PC-3 (cell line): ENCODE measurements at regions of chr3 and their contacts with region 1.

Region 1: DNA sequence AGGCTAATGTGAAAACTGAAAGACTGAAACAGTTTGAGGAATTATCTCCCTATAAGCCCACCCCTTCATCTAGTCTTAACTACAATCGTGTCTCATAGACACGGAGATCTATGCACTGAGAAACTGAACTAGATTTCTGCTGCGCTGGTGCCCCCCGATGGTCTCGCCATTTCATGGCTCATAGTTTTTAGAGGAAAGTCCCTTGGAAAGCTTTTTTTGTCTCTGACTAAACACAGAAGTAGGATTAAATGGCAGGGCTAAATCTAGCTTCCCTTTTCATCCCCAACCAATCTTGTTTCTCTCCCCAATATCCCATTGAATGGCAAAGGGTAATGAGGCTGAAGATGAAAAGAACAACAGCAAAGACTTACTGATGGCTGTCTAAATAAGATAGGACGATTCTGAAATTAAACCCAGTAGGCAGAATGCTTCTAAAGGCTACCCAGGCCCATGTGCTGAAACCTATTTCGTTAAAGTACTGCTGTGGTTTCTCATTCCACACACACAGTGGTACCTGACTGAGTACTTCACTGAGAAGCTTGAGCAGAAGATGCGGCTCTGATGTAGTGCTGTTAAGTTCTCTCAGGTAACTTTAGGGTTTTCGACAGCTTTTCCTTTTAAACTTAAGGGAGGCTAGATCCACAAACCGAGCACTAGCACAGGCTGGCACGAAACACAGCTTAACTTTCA is 142.7 kb downstream of the GADL1 start:
- DNase-seq: peak; percentile 62
- ATAC-seq: peak; percentile 12; the same call in 1 of the 2 replicates
- H3K4me3 ChIP-seq: no peak overlapping the region
- H3K27ac ChIP-seq: no peak overlapping the region
- H3K4me1 ChIP-seq: peaks cover 44% of the 10 kb centered on the region
- H3K27me3 ChIP-seq: no peaks in the 10 kb centered on the region
- CTCF ChIP-seq: peak; percentile 68

Region 2: DNA sequence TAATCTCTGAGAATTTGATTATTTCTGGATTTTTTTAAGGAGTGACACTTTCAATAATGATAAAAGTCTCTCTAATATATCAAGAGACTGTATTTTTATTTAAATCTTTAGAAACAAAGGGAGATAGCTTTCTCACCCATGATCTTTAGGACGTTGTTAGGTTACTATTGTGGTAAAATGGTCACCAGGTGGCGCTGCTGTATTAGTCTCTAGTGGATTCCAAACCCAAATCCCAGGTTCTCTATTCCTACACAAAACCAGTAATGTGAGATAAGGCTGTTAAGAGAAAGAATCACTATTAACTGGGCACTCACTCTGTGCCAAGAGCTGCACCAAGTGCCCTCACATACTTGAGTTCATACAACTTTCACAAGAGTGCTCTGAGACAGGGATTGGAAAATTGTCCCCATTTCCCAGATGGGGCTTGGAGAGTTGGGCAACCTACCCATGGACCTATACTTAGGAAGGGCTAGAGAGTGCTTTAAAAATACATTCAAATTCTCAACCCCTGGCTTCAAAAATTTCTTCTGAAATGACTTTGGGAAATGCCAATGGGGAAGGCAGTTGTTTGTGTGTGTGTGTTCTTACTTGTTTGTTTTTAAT is 738.7 kb before region 1 on chr3:
- CTCF ChIA-PET with region 1: interaction called, 6 read pairs
- POLR2A ChIA-PET with region 1: no interaction called
- intact Hi-C with region 1: loop called (anchors 1 kb)
- DNase-seq: peak; percentile 92
- ATAC-seq: peak; percentile 89
- H3K4me3 ChIP-seq: no peak overlapping the region
- H3K27ac ChIP-seq: no peak overlapping the region
- H3K4me1 ChIP-seq: peaks cover 8% of the 10 kb centered on the region
- H3K27me3 ChIP-seq: no peaks in the 10 kb centered on the region
- CTCF ChIP-seq: peak; percentile 94

Region 3: DNA sequence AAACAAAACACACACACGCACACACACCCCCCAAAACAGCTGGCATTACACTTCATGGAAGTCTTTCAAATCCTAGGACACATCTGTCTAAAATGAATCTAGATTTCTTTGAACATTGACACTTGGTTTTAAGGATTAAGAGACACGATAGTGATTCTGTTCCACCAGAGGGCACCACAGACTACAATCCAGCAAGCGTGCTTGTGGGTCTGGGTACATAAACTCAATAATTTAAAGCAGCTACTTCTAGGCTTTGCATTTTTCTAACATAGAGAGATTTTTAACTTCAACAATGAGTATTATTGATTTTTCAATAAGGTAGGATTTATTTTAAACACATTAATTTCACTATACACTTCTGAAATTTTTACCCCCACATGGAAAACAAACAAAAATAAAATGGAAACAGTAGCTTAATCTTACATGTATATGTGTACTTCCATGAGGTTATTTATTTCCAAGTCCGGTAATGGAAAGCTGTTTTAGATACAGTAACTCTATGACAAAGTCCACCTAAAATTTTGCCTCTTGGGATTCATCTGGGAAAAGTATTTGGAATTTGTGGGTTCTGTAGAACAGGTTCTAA is 709.4 kb before region 1 on chr3:
- CTCF ChIA-PET with region 1: interaction called, 3 read pairs
- POLR2A ChIA-PET with region 1: no interaction called
- intact Hi-C with region 1: loop called (anchors 1 kb)
- DNase-seq: peak; percentile 84
- ATAC-seq: peak; percentile 87
- H3K4me3 ChIP-seq: no peak overlapping the region
- H3K27ac ChIP-seq: no peak overlapping the region
- H3K4me1 ChIP-seq: no peaks in the 10 kb centered on the region
- H3K27me3 ChIP-seq: no peaks in the 10 kb centered on the region
- CTCF ChIP-seq: peak; percentile 93

Region 4: DNA sequence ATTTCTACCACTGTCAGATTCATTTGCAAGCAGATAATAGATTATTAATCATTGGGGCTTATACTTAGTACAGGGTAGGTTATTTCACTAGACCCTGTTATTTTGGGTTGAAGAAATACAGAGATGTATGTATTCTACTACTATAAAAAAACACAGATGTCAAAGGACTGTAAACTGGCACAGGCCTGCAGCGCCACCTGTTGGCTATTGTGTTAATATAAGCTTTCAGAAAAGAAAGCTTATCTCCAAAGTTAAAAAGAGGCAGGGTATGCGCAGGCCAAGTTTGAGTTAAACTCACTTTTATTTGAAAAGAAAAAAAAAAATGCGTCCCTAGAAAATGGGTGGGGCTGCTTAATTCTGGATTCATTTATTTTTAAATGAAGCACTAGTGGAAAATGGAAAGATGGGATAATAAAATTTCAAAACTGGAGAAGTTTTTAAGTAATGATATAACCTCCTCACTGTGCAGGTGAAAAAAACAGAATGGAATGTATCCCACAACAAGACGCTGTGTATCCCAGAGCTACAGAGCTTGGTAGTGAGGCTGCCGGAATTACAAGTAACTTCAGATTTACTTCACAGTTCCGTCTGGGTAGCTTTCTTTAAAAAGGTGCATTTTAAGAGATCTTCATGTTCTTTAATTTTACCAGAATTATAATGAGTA is 552.5 kb before region 1 on chr3:
- CTCF ChIA-PET with region 1: interaction called, 3 read pairs
- POLR2A ChIA-PET with region 1: no interaction called
- intact Hi-C with region 1: loop called (anchors 2 kb)
- DNase-seq: peak; percentile 77
- ATAC-seq: peak; percentile 59
- H3K4me3 ChIP-seq: no peak overlapping the region
- H3K27ac ChIP-seq: no peak overlapping the region
- H3K4me1 ChIP-seq: no peaks in the 10 kb centered on the region
- H3K27me3 ChIP-seq: no peaks in the 10 kb centered on the region
- CTCF ChIP-seq: peak; percentile 93

Region 5: DNA sequence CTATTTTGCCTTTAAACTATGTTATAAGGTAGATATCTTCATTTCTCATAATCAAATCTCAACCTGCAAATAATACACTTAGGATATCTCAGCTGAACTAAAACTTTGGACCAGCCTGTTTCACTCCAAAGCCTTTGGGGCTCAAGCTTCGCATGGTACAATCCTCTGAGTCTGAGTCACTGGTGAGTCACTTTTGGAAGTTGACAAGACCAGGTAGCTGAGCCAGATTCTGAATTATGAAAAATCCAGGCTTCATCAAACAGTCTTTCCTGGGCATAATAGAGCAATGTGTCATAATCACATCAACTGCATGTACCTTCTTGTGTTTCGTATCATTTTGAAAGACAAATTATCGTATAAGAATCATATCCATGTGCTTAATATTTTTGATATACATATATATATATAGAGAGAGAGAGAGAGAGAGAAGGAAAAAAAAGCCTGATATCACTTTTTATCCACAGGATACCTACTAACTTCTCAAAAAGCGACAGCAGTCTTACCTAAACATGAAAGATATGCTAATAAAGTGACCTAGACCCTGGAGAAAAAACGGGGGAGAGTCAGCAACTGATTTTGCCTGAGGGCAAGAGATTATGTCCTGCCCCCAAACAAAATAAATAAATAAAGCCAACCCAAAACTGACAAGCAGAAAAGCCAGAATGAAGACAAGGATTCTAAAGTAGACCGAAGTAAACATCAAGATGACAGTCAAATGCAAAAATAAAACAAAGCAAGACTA is 409.3 kb before region 1 on chr3:
- CTCF ChIA-PET with region 1: no interaction called
- POLR2A ChIA-PET with region 1: no interaction called
- intact Hi-C with region 1: loop called (anchors 5 kb)
- DNase-seq: peak; percentile 99
- ATAC-seq: peak; percentile 64
- H3K4me3 ChIP-seq: peak overlapping the region; percentile 28; the same call in 1 of the 2 replicates
- H3K27ac ChIP-seq: peak overlapping the region; percentile 98
- H3K4me1 ChIP-seq: peaks cover 59% of the 10 kb centered on the region
- H3K27me3 ChIP-seq: no peaks in the 10 kb centered on the region
- CTCF ChIP-seq: no peak

Region 6: DNA sequence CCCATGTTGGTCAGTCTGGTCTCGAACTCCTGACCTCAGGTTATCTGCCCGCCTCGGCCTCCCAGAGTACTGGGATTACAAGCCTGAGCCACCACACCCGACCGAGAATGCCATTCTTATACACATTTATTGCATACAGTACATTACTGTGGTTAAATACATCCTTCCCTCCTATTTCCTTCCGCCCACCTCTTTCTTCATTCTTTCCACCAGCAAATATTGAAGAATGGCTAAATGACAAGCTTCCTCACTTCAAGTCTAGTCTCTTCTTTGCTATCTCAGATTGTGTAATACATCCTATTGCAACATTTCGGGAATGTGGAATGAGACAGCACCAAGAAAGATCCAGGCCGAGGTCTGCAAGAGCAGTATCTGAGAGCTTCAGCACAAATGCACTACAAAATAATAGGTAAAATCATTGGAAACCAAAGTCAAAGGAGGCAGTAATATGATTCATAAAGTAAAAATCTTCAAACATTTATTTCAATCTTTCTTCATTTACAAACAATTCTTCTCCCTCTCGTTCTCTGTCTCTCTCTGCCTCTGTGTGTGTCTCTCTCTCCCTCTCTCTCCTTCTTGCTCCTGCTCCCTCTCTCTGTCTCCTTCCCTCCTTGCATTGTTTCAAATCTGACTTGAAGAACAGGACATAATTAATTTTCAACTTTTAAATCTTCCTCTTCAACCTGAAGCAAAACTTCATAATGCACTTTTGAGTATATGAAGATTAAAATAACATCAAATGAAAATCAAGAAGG is 240.1 kb before region 1 on chr3:
- CTCF ChIA-PET with region 1: no interaction called
- POLR2A ChIA-PET with region 1: no interaction called
- intact Hi-C with region 1: loop called (anchors 10 kb)
- DNase-seq: peak; percentile 98
- ATAC-seq: peak; percentile 74
- H3K4me3 ChIP-seq: no peak overlapping the region
- H3K27ac ChIP-seq: peak overlapping the region; percentile 71
- H3K4me1 ChIP-seq: peaks cover 43% of the 10 kb centered on the region
- H3K27me3 ChIP-seq: no peaks in the 10 kb centered on the region
- CTCF ChIP-seq: no peak

Region 7: DNA sequence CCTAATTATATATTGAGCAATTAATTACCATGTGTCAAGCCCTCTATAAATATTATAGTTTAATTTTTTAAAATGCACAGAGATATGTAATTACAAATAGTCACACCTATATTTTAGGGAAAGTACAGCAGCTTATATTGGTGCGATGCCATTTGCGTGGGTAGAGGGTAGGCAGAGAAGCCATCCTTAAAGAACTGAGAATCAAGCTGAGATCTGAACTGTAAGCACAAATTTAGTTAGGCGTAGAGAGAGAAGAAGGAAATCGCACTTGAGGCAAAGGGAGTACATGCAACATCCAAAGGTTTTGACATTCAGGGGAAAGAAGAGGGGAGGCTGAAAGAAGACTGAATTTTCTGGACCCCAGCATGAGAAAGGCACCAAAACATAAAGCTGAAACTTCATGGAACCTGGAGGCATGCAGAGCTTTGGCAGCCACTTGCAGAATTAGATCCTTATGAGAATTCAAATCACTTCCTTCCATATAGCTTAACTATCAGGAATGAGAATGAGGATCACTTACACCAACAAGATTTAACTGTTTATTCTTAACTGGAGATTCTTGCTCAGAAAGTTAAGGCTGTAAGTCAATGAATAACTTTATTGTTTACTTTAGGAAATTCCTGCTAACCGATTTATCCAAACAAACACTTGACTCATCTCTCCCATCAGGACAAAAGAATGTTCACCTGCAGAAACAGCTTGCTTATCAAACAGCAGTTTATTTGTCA is 31.0 kb before region 1 on chr3:
- CTCF ChIA-PET with region 1: no interaction called
- POLR2A ChIA-PET with region 1: no interaction called
- intact Hi-C with region 1: loop called (anchors 1 kb)
- DNase-seq: peak; percentile 97
- ATAC-seq: peak; percentile 92
- H3K4me3 ChIP-seq: peak overlapping the region; percentile 36; the same call in 1 of the 2 replicates
- H3K27ac ChIP-seq: peak overlapping the region; percentile 87
- H3K4me1 ChIP-seq: peaks cover 22% of the 10 kb centered on the region
- H3K27me3 ChIP-seq: no peaks in the 10 kb centered on the region
- CTCF ChIP-seq: no peak

Region 8: DNA sequence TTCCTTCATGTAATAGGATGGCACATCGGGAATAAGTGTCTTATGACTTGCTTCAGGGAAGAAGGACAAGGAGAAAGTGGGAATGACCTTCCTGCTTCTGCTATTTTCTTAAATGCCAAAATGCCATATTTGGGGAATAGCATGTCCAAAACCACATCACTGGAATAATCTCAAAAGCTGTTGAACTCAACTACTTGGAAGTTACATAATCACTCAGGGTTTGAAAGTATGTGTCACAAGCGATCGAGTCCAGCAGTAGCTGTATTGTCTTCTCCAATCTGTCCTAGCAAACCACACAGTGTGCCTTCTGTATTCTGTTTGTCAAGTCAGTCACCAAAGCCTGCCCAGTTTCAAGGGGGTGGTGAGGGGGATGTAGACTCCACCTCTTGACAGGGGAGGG is 201.0 kb after region 1 on chr3:
- CTCF ChIA-PET with region 1: no interaction called
- POLR2A ChIA-PET with region 1: no interaction called
- intact Hi-C with region 1: no loop called
- DNase-seq: no peak
- ATAC-seq: no peak
- H3K4me3 ChIP-seq: no peak overlapping the region
- H3K27ac ChIP-seq: no peak overlapping the region
- H3K4me1 ChIP-seq: no peaks in the 10 kb centered on the region
- H3K27me3 ChIP-seq: no peaks in the 10 kb centered on the region
- CTCF ChIP-seq: no peak